SK-N-SH (cell line): ENCODE measurements at regions of chr2 and their contacts with region 1.

Region 1: GRCh38 chr2:27016801-27017325 is 15.9 kb upstream of the TMEM214 start:
- DNase-seq: peak; percentile 86
- H3K4me3 ChIP-seq: no peak overlapping the region
- H3K27ac ChIP-seq: peak overlapping the region in 1 of 2 experiments; percentile 68; a peak in 1 of 4 replicates
- H3K4me1 ChIP-seq: peaks cover 17 to 21% of the 10 kb centered on the region in 2 experiments; a peak in 2 of 4 replicates
- H3K27me3 ChIP-seq: no peaks in the 10 kb centered on the region
- CTCF ChIP-seq: peak; percentile 90
- EP300 ChIP-seq: no peak
- RAD21 ChIP-seq: peak; percentile 94

Region 2: GRCh38 chr2:26922405-26923188 is 94.3 kb before region 1 on chr2:
- CTCF ChIA-PET with region 1: interaction called, 13 read pairs
- POLR2A ChIA-PET with region 1: no interaction called
- DNase-seq: peak; percentile 89
- H3K4me3 ChIP-seq: no peak overlapping the region
- H3K27ac ChIP-seq: peak overlapping the region in 1 of 2 experiments; percentile 22; a peak in 1 of 4 replicates
- H3K4me1 ChIP-seq: peaks cover 0 to 16% of the 10 kb centered on the region in 2 experiments; a peak in 2 of 4 replicates
- H3K27me3 ChIP-seq: peaks cover 9% of the 10 kb centered on the region; the same call in 1 of the 2 replicates
- CTCF ChIP-seq: peak; percentile 57
- EP300 ChIP-seq: no peak
- RAD21 ChIP-seq: peak; percentile 88

Region 3: DNA sequence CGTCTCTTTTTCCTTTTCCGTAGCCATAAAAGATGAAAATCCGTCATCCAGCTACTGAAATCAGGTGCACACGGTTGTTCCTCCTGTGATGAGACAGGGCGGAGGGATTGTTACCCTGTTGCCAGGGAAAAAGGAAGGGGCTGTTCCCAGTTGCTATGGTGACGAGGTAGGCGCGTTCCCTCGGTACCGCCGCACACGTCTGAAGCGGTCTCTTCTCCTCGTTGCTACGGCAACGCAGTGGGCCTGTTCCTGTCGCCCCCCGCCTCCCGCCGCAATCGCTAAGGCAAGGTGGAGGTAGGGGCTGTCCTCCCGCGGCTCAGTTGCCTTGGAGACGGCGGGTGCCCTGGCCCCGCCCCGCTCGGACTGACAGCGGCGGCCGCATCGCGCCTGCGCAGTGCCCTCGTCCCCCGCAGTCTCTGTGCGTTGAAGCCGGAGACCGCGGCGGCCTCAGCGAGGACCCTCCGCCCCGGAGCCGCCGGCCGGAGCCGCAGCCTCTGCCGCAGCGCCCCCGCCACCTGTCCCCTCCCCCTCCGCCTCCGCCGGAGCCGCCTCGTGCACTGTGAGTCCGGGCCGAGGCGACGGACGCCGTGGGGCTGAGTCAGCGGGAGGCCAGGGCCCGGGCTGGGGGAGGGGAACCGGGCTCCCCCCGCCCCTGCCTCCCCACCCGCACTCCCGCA is 46.5 kb before region 1 on chr2 and contains the start of gene MAPRE3:
- CTCF ChIA-PET with region 1: interaction called, 1,017 read pairs
- POLR2A ChIA-PET with region 1: interaction called, 4 read pairs
- DNase-seq: peak; percentile 100
- H3K4me3 ChIP-seq: peak within 1 kb of the TSS; percentile 65 to 78
- H3K27ac ChIP-seq: peak within 1 kb of the TSS in 1 of 2 experiments; percentile 7; a peak in 1 of 4 replicates
- H3K4me1 ChIP-seq: peaks cover 0 to 13% of the 10 kb centered on the region in 2 experiments; a peak in 2 of 4 replicates
- H3K27me3 ChIP-seq: peaks cover 7% of the 10 kb centered on the region; the same call in 1 of the 2 replicates
- CTCF ChIP-seq: no peak
- EP300 ChIP-seq: no peak
- RAD21 ChIP-seq: no peak
- polyA plus RNA-seq, gene MAPRE3: 20.2 and 24.4 TPM in 2 replicates

Region 4: DNA sequence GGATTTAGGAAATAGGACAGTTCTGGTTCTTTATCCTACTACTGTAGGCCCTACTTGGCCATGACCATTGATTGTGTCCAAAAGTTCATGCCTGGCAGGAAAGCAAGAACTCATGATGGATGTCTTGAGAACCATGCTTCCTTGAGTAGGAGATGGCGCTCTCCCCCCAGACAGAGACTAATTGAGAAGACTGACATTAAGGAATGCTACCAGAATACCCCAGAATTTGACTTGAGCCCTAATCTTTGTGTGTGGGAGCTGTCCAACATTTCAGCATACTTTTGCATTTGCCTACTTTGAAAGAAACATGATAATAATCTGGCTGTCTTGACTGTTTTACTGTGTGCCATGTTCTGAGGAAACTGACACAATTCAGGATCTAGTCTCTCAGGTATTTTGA is 23.1 kb before region 1 on chr2:
- CTCF ChIA-PET with region 1: interaction called, 20 read pairs
- POLR2A ChIA-PET with region 1: no interaction called
- DNase-seq: no peak
- H3K4me3 ChIP-seq: no peak overlapping the region
- H3K27ac ChIP-seq: no peak overlapping the region
- H3K4me1 ChIP-seq: peaks cover 0 to 4% of the 10 kb centered on the region in 2 experiments; a peak in 1 of 4 replicates
- H3K27me3 ChIP-seq: no peaks in the 10 kb centered on the region
- CTCF ChIP-seq: no peak
- EP300 ChIP-seq: no peak
- RAD21 ChIP-seq: no peak

Region 5: DNA sequence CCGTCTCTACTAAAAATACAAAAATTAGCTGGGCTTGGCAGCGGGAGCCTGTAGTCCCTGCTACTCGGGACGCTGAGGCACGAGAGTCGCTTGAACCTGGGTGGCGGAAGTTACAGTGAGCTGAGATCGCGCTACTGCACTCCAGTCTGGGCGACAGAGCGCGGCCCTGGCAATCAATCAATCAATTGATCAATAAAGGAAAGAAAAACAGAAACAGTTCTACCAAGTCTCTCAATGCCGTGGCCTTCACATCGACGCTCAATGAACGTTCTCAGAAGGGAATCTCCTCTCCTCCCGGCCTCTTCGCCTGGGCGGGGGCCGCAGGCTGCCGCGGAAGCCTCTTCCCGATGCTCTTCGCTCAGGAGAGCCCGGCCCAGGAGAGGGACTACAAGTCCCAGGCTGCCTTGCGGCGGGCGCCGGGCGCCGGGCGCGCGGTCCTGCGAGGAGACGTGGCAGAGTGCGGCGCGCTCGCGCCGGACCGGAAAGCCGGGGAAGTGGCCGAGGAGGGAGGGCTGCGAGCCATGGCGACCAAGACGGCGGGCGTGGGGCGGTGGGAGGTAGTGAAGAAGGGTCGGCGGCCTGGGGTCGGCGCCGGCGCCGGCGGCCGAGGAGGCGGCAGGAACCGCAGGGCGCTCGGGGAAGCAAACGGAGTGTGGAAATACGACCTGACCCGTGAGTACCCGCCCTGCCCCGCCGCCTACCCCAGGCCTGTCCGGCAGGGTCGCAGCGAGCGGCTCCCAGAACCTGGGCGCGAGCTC is 15.8 kb after region 1 on chr2 and contains the start of gene TMEM214:
- CTCF ChIA-PET with region 1: interaction called, 40 read pairs
- POLR2A ChIA-PET with region 1: no interaction called
- DNase-seq: peak; percentile 99
- H3K4me3 ChIP-seq: peak within 1 kb of the TSS; percentile 87 to 95
- H3K27ac ChIP-seq: peak within 1 kb of the TSS; percentile 54 to 75; a peak in 2 of 4 replicates
- H3K4me1 ChIP-seq: peaks cover 8 to 17% of the 10 kb centered on the region in 2 experiments; a peak in 3 of 4 replicates
- H3K27me3 ChIP-seq: no peaks in the 10 kb centered on the region
- CTCF ChIP-seq: no peak
- EP300 ChIP-seq: no peak
- RAD21 ChIP-seq: no peak
- polyA plus RNA-seq, gene TMEM214: 69.4 and 80.2 TPM in 2 replicates

Region 6: DNA sequence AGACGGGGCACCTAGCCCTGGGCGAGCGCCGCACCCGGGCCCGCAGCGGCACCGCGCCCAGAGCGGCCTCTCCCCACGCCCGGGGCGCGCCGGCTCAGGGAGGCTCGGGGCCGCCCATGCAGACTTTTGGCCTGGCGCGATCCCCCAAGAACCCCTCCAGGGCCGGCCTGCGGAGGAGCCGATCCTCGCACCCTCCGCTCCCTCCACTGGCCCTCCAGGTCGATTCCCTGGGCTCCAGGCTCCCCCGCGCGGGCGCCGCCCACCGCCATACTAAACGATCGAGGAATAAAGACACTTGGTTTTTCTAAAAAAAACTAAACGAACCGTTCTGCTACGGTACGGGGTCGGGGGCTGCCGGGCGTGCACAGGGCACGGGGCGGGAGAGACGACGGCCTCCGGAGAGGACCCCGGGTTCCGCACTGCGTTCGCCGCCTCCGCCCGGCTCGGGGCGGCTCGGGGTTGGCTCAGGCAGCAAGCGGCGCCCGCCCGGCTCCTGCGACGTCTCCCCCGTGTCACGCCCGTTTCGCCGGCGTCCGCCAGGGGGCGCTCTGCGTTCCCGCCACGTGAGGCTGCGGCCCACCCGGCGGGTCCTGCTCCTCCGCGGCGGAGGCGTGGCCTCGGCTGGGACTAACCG is 69.3 kb after region 1 on chr2:
- CTCF ChIA-PET with region 1: interaction called, 30 read pairs
- POLR2A ChIA-PET with region 1: no interaction called
- DNase-seq: peak; percentile 100
- H3K4me3 ChIP-seq: peak overlapping the region; percentile 65 to 75
- H3K27ac ChIP-seq: peak overlapping the region; percentile 37 to 89; a peak in 3 of 4 replicates
- H3K4me1 ChIP-seq: peaks cover 9 to 46% of the 10 kb centered on the region in 2 experiments; a peak in 3 of 4 replicates
- H3K27me3 ChIP-seq: no peaks in the 10 kb centered on the region
- CTCF ChIP-seq: peak; percentile 69
- EP300 ChIP-seq: peak in 1 of 2 experiments; percentile 42; a peak in 1 of 4 replicates
- RAD21 ChIP-seq: peak; percentile 52